MCF 10A (cell line): ENCODE measurements at regions of chr12 and their contacts with region 1.

Region 1: GRCh38 chr12:46455648-46456352 is 83.2 kb upstream of the SLC38A2 start:
- DNase-seq: peak; percentile 55
- H3K4me3 Mint-ChIP-seq: peak overlapping the region; percentile 22
- H3K27ac Mint-ChIP-seq: peak overlapping the region; percentile 59
- H3K4me1 Mint-ChIP-seq: peaks cover 55% of the 10 kb centered on the region
- H3K27me3 Mint-ChIP-seq: no peaks in the 10 kb centered on the region
- CTCF ChIP-seq: no peak

Region 2: GRCh38 chr12:46468159-46468558 is 12.4 kb after region 1 on chr12:
- CTCF ChIA-PET with region 1: interaction called, 3 read pairs
- POLR2A ChIA-PET with region 1: interaction called, 22 read pairs
- intact Hi-C with region 1: no loop called
- DNase-seq: peak; percentile 54
- H3K4me3 Mint-ChIP-seq: no peak overlapping the region
- H3K27ac Mint-ChIP-seq: peak overlapping the region; percentile 59
- H3K4me1 Mint-ChIP-seq: peaks cover 21% of the 10 kb centered on the region
- H3K27me3 Mint-ChIP-seq: no peaks in the 10 kb centered on the region
- CTCF ChIP-seq: no peak